ENCODE measurements at regions of chr3 and their contacts with region 1.

Region 1: DNA sequence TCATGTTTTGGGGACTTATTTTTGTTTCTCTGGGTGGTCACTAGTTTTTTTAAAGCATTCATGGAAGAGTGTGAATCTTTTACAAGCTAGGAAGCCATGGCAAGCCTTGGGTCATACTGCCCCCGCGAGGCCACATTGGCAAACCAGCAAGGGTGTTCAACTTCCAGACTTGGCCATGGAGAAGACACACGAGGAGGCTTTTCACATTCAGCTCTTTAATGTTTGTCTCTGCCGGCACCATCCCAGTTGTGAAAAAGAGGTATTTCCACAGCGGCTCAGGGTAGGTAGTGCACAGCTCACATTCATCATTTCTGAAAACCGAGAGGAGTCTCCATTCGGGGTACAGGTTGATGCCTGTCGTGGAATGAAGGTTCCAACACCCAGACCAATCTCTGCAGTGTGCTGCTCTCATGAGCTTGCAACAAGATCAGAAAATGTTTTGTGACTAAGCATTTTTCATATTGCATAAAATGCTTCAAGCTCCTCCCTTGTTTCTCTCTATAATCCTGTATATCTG is 7.7 kb downstream of the CCR5 start:
- DNase-seq: peak; percentile 73
- H3K4me3 Mint-ChIP-seq: no peak overlapping the region
- H3K27ac Mint-ChIP-seq: peak overlapping the region; percentile 4
- H3K4me1 Mint-ChIP-seq: peaks cover 16% of the 10 kb centered on the region
- H3K27me3 Mint-ChIP-seq: peaks cover 33% of the 10 kb centered on the region
- CTCF ChIP-seq: peak; percentile 73

Region 2: DNA sequence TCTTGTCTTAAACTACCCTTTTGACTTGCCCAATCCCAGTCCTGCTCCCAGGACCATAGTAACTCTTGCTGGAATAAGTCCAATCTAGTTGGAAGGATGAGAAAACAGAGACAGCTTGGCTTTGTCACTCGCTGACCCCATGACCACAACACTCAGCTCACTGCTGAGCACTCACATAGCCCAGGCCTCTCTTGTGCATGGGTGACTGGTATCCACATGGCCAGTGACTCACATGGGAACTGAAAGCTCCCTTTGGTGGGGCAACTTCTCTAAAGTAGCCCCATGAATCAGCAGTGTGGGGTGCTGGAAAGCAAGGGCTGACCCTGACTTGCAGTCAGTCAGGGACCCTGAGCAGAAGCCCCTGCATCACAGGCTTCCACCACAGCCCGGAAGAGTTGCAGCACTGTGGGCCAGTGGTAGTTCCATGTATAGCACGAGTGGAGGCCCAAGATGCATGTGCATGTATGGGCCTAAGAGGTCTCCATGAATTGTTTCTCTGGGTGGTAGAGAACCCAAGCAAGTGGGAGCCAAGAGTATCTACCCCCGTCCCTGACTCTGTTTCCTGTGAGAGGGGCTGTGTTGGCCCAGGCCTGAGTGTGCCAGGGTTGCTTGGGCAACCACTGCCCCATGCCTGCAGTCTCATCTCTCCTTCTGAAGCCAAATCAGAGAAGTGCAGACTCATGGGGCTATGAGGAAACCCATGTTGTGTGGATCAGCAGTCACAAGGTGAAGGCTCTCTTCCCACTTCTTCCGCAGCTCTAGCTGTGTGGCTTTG is 289.1 kb before region 1 on chr3:
- CTCF ChIA-PET with region 1: interaction called, 202 read pairs
- POLR2A ChIA-PET with region 1: interaction called, 4 read pairs
- intact Hi-C with region 1: no loop called
- DNase-seq: peak; percentile 77
- H3K4me3 Mint-ChIP-seq: no peak overlapping the region
- H3K27ac Mint-ChIP-seq: peak overlapping the region; percentile 28
- H3K4me1 Mint-ChIP-seq: peaks cover 4% of the 10 kb centered on the region
- H3K27me3 Mint-ChIP-seq: no peaks in the 10 kb centered on the region
- CTCF ChIP-seq: no peak

Region 3: GRCh38 chr3:46214751-46215352 is 163.6 kb before region 1 on chr3:
- CTCF ChIA-PET with region 1: interaction called, 12 read pairs
- POLR2A ChIA-PET with region 1: no interaction called
- intact Hi-C with region 1: no loop called
- DNase-seq: no peak
- H3K4me3 Mint-ChIP-seq: no peak overlapping the region
- H3K27ac Mint-ChIP-seq: no peak overlapping the region
- H3K4me1 Mint-ChIP-seq: no peaks in the 10 kb centered on the region
- H3K27me3 Mint-ChIP-seq: peaks cover 12% of the 10 kb centered on the region
- CTCF ChIP-seq: peak; percentile 44

Region 4: DNA sequence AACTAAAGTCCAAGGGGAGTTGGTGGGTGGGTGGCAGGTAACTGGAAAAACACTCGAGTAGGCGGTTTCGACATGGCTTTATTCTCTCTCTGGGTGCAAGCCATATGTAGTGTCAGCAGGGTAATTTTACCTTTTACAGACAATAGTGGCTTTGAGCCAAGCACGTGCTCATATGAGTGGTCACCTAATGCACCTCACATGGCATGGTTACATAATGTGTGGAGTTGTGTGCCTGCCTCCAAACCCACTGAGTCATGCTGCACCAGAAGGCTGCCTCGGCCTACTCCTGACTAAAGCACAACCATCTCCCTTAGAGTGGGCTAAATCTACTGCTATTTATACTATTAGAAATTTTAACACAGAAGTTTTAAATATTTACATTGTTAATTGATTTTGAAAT is 45.1 kb after region 1 on chr3:
- CTCF ChIA-PET with region 1: interaction called, 6 read pairs
- POLR2A ChIA-PET with region 1: interaction called, 5 read pairs
- intact Hi-C with region 1: loop called (anchors 2 kb)
- DNase-seq: peak; percentile 97
- H3K4me3 Mint-ChIP-seq: no peak overlapping the region
- H3K27ac Mint-ChIP-seq: no peak overlapping the region
- H3K4me1 Mint-ChIP-seq: peaks cover 16% of the 10 kb centered on the region
- H3K27me3 Mint-ChIP-seq: no peaks in the 10 kb centered on the region
- CTCF ChIP-seq: no peak

Region 5: GRCh38 chr3:46442576-46443562 is 64.4 kb after region 1 on chr3:
- CTCF ChIA-PET with region 1: interaction called, 8 read pairs
- POLR2A ChIA-PET with region 1: interaction called, 3 read pairs
- intact Hi-C with region 1: loop called (anchors 2 kb)
- DNase-seq: peak; percentile 64
- H3K4me3 Mint-ChIP-seq: no peak overlapping the region
- H3K27ac Mint-ChIP-seq: no peak overlapping the region
- H3K4me1 Mint-ChIP-seq: no peaks in the 10 kb centered on the region
- H3K27me3 Mint-ChIP-seq: peaks cover 12% of the 10 kb centered on the region
- CTCF ChIP-seq: peak; percentile 44

Region 6: DNA sequence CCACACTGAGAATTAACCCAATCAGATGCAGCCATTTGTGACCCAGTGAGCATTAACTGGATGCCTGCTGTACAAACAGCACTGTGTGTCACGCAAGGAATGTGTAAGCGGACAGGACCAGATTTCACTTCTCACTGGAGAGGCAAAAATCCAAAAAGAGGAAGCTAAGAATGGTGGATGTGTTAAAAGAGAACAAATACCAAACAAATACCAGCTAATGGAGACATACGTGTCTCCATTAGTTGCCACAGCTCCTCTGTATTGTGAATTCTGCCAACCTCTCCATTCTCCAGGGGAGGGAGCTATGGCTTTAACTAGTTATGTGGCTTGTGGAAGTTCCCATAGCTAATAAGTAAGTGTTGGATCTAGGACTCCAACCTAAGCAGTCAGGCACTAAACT is 83.6 kb after region 1 on chr3:
- CTCF ChIA-PET with region 1: no interaction called
- POLR2A ChIA-PET with region 1: no interaction called
- intact Hi-C with region 1: no loop called
- DNase-seq: peak; percentile 22
- H3K4me3 Mint-ChIP-seq: no peak overlapping the region
- H3K27ac Mint-ChIP-seq: no peak overlapping the region
- H3K4me1 Mint-ChIP-seq: peaks cover 8% of the 10 kb centered on the region
- H3K27me3 Mint-ChIP-seq: peaks cover 70% of the 10 kb centered on the region
- CTCF ChIP-seq: no peak

Measured in MCF 10A (cell line).